Naive thymus-derived CD8-positive, alpha-beta T cell (primary cell): ENCODE measurements at regions of chr10 and their contacts with region 1.

Region 1: DNA sequence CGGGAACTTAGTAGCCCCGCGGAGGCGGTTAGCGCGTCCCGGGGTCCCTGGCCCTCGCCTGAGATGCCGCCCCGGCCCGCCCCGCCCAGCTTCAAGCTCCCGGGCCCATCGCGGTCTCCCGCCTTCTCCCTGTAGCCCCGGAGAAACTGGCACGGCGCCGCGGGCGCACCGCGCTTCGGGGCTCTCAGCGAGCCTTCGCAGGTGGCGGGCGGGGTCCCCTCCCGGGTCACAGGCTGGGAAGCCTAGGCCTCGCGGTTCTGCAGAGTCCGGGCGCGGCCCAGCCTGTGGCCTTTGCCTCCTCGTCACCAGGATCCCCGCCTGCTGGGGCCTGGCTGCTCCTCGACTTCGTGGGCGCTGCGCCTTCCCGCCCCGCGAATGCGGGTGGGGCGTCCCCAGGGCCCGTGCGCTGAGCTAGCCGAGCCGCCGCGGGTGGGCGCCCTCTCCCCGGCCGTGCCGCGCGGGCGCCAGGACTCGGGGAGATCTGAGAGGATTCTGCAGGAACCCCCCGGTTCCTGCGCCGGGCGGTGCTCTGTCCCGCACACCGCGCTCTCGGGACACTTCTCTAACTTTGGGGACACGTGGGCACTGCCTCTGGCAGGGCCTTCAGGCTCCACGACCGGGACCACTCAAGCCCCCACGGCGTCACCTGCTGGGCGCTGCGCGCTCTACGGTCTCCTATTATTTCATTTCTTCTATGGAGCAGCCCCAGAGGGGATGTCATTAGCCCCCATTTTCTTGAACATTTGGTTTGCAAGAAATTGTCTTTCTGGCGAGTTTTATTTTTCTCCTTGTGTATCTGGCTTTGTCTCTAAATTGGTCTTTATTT is 682 bp upstream of the RGS10 start:
- DNase-seq: peak; percentile 54 to 78 (median 64)
- ATAC-seq: peak; percentile 46 to 56
- H3K4me3 Mint-ChIP-seq: peak overlapping the region; percentile 76 to 98 (median 96)
- H3K27ac Mint-ChIP-seq: peak overlapping the region; percentile 86 to 96 (median 92)
- H3K4me1 Mint-ChIP-seq: peaks cover 24 to 39% (median 31%) of the 10 kb centered on the region in 4 donors
- H3K27me3 Mint-ChIP-seq: peaks cover 0 to 3% (median 0%) of the 10 kb centered on the region in 5 donors

Region 2: DNA sequence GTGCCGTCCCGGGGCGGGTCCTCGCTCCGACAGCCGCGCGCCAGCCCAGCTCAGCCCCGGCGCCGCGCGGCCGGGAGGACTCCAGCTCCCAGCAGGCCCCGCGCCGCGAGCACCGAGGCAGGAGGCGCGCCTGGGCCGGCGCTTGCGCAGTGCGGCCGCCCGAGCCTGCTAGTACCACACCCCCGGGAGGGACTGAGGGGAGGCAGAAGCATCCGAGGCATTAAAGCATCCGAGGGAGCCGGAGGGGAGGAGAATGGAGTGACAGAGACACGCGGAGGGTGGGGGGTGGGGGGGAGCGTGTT is 335.9 kb before region 1 on chr10 and contains the start of gene GRK5:
- POLR2A ChIA-PET with region 1: interaction called, 18 read pairs
- DNase-seq: peak; percentile 87 to 98 (median 97)
- ATAC-seq: peak; percentile 77 to 82
- H3K4me3 Mint-ChIP-seq: peak within 1 kb of the TSS; percentile 88 to 99 (median 96)
- H3K27ac Mint-ChIP-seq: peak within 1 kb of the TSS; percentile 92 to 98 (median 95)
- H3K4me1 Mint-ChIP-seq: peaks cover 26 to 48% (median 43%) of the 10 kb centered on the region in 4 donors
- H3K27me3 Mint-ChIP-seq: no peaks in the 10 kb centered on the region
- polyA plus RNA-seq, gene GRK5: 4.4 to 11.0 (median 10.0) TPM

Region 3: DNA sequence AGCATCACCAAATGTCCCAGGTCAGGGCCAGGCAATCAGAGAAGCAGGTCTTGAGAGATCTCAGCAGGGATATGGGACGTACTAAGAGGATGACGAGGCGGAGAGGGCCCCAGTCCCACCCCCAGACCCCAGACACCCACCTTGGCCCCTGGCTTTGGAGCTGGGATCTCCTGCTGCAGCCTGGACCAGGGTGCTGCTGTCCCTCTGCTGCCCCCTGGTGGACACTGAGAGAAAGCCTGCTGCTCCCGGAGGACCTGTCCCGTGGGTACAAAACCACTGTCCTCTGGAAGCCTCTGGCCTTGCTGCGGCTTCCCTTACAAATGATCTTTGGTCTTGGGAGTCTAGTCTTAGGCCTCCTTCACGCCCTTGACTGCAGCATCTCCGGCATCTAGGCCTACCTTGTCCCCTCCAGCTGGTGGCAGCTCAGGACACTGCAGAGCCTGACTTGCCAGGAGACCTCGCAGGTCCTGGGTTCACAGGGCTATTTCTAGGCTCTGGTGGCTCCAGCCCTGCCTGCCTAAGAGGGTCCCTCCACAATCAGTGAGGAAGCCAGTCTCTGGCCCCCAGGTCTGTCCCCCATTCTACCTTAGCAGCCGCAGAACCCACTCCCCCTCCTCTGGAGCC is 97.8 kb before region 1 on chr10:
- POLR2A ChIA-PET with region 1: interaction called, 22 read pairs
- DNase-seq: peak; percentile 66 to 90 (median 83)
- ATAC-seq: peak; percentile 82 to 91
- H3K4me3 Mint-ChIP-seq: peak overlapping the region in 1 of 10 donors; percentile 26
- H3K27ac Mint-ChIP-seq: peak overlapping the region in 4 of 10 donors; percentile 29 to 88 (median 52)
- H3K4me1 Mint-ChIP-seq: peaks cover 16 to 26% (median 17%) of the 10 kb centered on the region in 4 donors
- H3K27me3 Mint-ChIP-seq: no peaks in the 10 kb centered on the region

Region 4: DNA sequence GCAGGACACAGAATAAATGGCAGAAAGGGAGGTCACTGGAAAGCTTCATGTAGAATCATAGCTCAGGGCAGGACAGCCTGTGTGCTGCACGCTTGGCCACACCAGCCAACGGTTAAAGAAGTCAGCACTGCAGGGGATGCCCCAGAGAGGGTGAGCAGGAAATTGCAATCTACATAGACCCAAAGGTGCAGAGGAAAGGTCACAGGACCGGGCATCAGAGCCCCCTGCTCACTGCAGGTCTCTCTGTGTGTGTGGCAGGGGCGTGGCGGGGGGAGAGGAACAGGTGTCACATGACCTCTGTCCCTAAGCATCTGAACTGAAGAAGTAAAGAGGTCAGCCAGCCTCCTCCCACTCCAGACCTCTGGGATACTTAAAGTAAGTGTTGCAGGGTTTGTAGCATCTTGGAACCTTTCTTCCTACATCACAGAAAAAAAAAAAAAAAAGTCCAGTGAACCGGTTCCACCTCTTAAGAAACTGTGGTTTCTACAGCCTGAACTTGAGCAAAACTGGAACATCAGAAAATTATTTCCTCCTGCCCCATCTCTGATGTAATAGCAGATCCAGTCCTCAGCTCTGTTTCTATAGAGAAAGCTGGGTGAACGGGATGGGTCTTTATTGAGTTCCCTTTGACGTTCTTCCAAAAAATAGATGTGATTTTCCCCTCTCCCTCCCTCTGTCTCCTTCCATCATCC is 64.9 kb before region 1 on chr10:
- POLR2A ChIA-PET with region 1: interaction called, 19 read pairs
- DNase-seq: peak in 3 of 10 donors; percentile 19 to 69 (median 29)
- ATAC-seq: peak; percentile 85 to 86
- H3K4me3 Mint-ChIP-seq: peak overlapping the region; percentile 16 to 76 (median 58)
- H3K27ac Mint-ChIP-seq: peak overlapping the region; percentile 52 to 80 (median 71)
- H3K4me1 Mint-ChIP-seq: peaks cover 19 to 38% (median 29%) of the 10 kb centered on the region in 4 donors
- H3K27me3 Mint-ChIP-seq: no peaks in the 10 kb centered on the region

Region 5: GRCh38 chr10:119489991-119490326 is 53.2 kb before region 1 on chr10:
- POLR2A ChIA-PET with region 1: interaction called, 674 read pairs
- DNase-seq: no peak
- ATAC-seq: no peak
- H3K4me3 Mint-ChIP-seq: peak overlapping the region; percentile 75 to 94 (median 88)
- H3K27ac Mint-ChIP-seq: peak overlapping the region; percentile 75 to 99 (median 96)
- H3K4me1 Mint-ChIP-seq: peaks cover 21 to 61% (median 55%) of the 10 kb centered on the region in 4 donors
- H3K27me3 Mint-ChIP-seq: no peaks in the 10 kb centered on the region

Region 6: GRCh38 chr10:119517235-119518141 is 25.7 kb before region 1 on chr10:
- POLR2A ChIA-PET with region 1: interaction called, 674 read pairs
- DNase-seq: peak in 5 of 10 donors; percentile 37 to 50 (median 42)
- ATAC-seq: peak; percentile 21 to 47
- H3K4me3 Mint-ChIP-seq: peak overlapping the region; percentile 60 to 85 (median 78)
- H3K27ac Mint-ChIP-seq: peak overlapping the region; percentile 88 to 99 (median 96)
- H3K4me1 Mint-ChIP-seq: peaks cover 29 to 86% (median 78%) of the 10 kb centered on the region in 4 donors
- H3K27me3 Mint-ChIP-seq: no peaks in the 10 kb centered on the region

Region 7: GRCh38 chr10:119588071-119588470 is 44.9 kb after region 1 on chr10:
- POLR2A ChIA-PET with region 1: no interaction called
- DNase-seq: no peak
- ATAC-seq: no peak
- H3K4me3 Mint-ChIP-seq: no peak overlapping the region
- H3K27ac Mint-ChIP-seq: no peak overlapping the region
- H3K4me1 Mint-ChIP-seq: peaks cover 6 to 44% (median 38%) of the 10 kb centered on the region in 4 donors
- H3K27me3 Mint-ChIP-seq: no peaks in the 10 kb centered on the region

Region 8: GRCh38 chr10:119650692-119651513 is 107.7 kb after region 1 on chr10 and contains the start of gene BAG3:
- POLR2A ChIA-PET with region 1: interaction called, 11 read pairs
- DNase-seq: peak; percentile 34 to 86 (median 72)
- ATAC-seq: peak; percentile 57 to 64
- H3K4me3 Mint-ChIP-seq: peak within 1 kb of the TSS; percentile 94 to 99 (median 97)
- H3K27ac Mint-ChIP-seq: peak within 1 kb of the TSS; percentile 90 to 99 (median 97)
- H3K4me1 Mint-ChIP-seq: peaks cover 28 to 45% (median 44%) of the 10 kb centered on the region in 4 donors
- H3K27me3 Mint-ChIP-seq: no peaks in the 10 kb centered on the region
- polyA plus RNA-seq, gene BAG3: 5.1 to 26.5 (median 12.5) TPM